ENCODE measurements at regions of chr16 and their contacts with region 1.

Region 1: DNA sequence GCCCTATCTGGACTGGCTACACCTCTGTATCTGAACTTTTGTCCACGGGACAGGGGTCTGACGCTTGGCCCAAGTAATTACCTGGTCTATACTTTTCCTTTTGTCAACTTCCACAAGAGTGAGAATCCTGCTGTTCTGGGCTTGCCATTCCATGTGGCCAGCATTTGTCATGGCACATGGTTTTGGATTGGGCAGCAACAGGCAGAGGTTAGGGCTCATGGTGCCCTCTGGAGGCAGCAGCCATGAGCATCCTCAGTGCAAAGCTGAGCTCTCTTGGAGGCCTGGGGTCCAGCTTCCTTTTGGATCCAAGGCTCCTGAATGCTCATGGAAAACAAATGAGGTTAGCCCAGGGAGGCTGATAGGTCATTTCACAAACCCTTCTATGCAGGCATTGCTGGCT is 7.5 kb upstream of the EDC4 start:
- DNase-seq: peak; percentile 47 to 73 (median 69)
- H3K4me3 ChIP-seq: no peak overlapping the region
- H3K27ac ChIP-seq: no peak overlapping the region
- H3K4me1 ChIP-seq: no peaks in the 10 kb centered on the region
- H3K27me3 ChIP-seq: no peaks in the 10 kb centered on the region

Region 2: DNA sequence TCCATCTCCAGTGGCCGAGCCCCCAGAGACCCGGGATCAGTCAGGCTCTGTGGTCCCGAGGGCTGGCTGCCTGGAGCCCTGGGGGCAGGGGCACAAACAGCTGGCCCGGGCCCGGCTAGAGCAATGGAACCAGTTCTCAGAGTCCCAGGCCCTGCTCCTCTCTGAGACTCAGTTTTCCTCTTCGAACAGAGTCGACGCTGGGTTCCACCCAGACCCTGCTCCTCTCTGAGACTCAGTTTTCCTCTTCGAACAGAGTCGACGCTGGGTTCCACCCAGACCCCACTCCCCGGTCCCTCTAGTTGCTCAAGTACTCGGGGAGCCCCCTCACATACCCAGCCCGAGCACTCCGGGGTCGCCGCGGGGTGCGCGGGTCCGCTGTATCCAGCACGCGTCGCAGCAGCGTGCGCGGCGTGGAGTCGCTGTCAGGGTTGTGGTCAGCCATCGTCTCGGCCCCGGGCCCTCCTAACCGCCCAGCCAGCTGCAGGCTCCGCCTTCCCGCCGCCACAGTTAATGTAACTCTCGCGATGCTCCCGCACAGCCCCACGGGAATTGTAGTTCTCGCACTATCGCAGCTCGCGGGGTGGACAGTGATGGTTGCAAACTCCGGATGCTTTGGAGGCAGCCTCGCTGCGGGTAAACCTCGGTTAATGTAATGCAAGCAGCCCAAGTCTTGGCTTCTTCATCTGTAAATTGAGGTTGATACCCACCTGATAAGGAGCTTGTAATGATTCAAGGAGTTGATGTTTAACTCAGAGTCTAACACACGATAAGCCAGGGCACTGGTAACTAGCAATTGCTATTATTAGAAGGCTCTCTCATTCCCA is 31.7 kb before region 1 on chr16:
- CTCF ChIA-PET with region 1: interaction called, 11 read pairs
- POLR2A ChIA-PET with region 1: no interaction called
- DNase-seq: peak; percentile 81 to 93 (median 91)
- H3K4me3 ChIP-seq: peak overlapping the region; percentile 60 to 83 (median 74)
- H3K27ac ChIP-seq: peak overlapping the region in 1 of 2 experiments; percentile 81
- H3K4me1 ChIP-seq: peaks cover 3 to 18% (median 15%) of the 10 kb centered on the region in 4 experiments
- H3K27me3 ChIP-seq: no peaks in the 10 kb centered on the region

Measured in common myeloid progenitor, CD34-positive (primary cell).